Gastrocnemius medialis (tissue), 4 donors: ENCODE measurements at regions of chr1 and their contacts with region 1.

Region 1: DNA sequence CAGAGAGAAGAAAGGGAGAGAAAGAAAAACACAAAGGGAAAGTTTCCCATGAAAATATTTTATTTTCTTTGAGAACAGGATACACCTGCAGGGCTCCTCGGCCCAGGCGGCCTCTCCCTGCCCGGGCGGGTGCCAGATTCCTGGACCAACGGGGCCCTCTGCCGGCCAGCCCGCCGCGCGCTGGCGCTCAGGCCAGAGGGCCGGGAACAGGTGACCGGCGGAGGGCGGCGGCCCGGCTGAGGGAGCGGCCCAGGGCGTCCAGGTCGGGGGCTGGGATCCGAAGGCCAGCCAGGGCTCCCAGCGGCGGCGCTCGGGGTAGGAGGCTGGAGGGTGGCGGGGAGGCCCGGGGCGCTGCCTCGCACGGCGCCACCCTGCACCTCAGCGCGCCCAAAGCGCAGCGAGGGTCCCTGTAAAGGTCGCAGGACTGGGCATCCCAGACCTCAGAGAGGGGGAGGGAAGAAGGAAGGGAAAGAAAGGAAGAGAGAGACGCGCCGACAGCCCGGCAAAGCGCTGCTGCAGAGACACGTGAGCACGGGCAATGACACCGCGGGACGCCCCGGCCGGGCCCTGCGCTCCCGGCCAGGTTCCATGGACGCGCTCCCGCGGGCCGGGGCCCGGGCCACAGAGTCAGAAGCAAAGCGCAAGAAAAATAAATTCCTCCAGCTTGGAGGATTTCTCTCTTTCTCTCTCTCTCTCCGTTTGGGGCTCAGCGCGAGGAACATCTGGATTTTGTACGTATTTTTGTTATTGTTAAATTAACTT is 927 bp downstream of the WNT9A start:
- DNase-seq: peak; percentile 76 to 86
- ATAC-seq: peak; percentile 48 to 49
- H3K4me3 ChIP-seq: peak overlapping the region; percentile 63 to 80 (median 72)
- H3K27ac ChIP-seq: peak overlapping the region; percentile 91 to 98 (median 97)
- H3K4me1 ChIP-seq: peaks cover 46 to 49% of the 10 kb centered on the region in 2 donors
- H3K27me3 ChIP-seq: no peaks in the 10 kb centered on the region
- CTCF ChIP-seq: peak; percentile 71 to 90 (median 84)
- POLR2A ChIP-seq: peak; percentile 51 to 60

Region 2: GRCh38 chr1:227318003-227318852 is 628.6 kb before region 1 on chr1 and contains the start of gene CDC42BPA:
- in situ Hi-C with region 1: no loop called
- intact Hi-C with region 1: loop called (anchors 2 kb)
- DNase-seq: peak; percentile 57 to 73
- ATAC-seq: peak; percentile 62 to 77
- H3K4me3 ChIP-seq: peak within 1 kb of the TSS; percentile 77 to 93 (median 86)
- H3K27ac ChIP-seq: peak within 1 kb of the TSS; percentile 92 to 97 (median 94)
- H3K4me1 ChIP-seq: peaks cover 5 to 14% of the 10 kb centered on the region in 2 donors
- H3K27me3 ChIP-seq: no peaks in the 10 kb centered on the region
- CTCF ChIP-seq: no peak
- POLR2A ChIP-seq: peak; percentile 35 to 39
- total RNA-seq, gene CDC42BPA: 13.9 to 30.6 (median 16.6) TPM

Region 3: GRCh38 chr1:227563324-227564201 is 383.2 kb before region 1 on chr1 and contains the start of gene ZNF678:
- in situ Hi-C with region 1: no loop called
- intact Hi-C with region 1: loop called (anchors 2 kb)
- DNase-seq: peak; percentile 85 to 92
- ATAC-seq: peak; percentile 99
- H3K4me3 ChIP-seq: peak within 1 kb of the TSS; percentile 77 to 87 (median 83)
- H3K27ac ChIP-seq: peak within 1 kb of the TSS; percentile 78 to 85 (median 83)
- H3K4me1 ChIP-seq: peaks cover 8 to 11% of the 10 kb centered on the region in 2 donors
- H3K27me3 ChIP-seq: peaks cover 0 to 9% (median 4%) of the 10 kb centered on the region in 3 donors
- CTCF ChIP-seq: no peak
- POLR2A ChIP-seq: peak in 1 of 2 donors; percentile 35
- total RNA-seq, gene ZNF678: 2.3 to 7.3 (median 4.9) TPM

Region 4: DNA sequence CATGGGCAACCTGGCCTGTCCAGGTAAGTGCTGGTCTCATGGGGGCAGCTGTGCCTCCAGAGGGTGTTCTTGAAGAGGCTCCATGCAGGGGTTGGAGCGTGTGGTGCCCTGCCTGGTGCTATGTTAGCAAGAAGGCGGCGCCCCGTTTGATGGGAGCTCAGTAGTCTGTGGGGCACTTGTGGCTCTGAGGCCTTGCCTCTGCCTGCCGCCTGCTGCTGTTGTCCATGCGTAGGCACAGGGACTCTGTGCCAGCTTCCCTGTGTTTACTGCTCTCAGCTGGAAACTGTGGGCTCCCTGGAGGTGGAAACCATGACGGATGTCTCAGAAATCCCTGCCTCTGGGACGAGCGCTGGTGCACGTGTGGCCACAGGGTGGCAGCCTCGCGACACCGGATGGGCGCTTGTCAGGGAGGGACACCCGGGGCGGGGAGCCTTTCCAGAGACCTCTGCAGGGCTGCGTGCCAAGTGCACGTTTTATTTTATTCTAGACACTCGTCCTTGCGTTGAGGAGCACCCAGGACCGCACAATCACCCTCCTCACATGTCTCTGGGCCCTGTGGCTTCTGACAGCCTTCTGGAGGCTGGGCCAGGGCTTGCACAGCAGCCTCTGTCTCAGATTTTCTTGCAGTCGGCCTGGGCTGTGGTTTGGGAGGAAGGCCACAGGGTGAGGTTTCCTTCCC is 184.4 kb before region 1 on chr1:
- in situ Hi-C with region 1: loop called in 2 of 4 experiments (anchors 5 to 10 kb)
- intact Hi-C with region 1: loop called (anchors 1 kb)
- DNase-seq: peak; percentile 71 to 85
- ATAC-seq: peak; percentile 27 to 40
- H3K4me3 ChIP-seq: no peak overlapping the region
- H3K27ac ChIP-seq: peak overlapping the region; percentile 90 to 95 (median 92)
- H3K4me1 ChIP-seq: peaks cover 48 to 54% of the 10 kb centered on the region in 2 donors
- H3K27me3 ChIP-seq: no peaks in the 10 kb centered on the region
- CTCF ChIP-seq: peak; percentile 91 to 94 (median 93)
- POLR2A ChIP-seq: no peak

Region 5: DNA sequence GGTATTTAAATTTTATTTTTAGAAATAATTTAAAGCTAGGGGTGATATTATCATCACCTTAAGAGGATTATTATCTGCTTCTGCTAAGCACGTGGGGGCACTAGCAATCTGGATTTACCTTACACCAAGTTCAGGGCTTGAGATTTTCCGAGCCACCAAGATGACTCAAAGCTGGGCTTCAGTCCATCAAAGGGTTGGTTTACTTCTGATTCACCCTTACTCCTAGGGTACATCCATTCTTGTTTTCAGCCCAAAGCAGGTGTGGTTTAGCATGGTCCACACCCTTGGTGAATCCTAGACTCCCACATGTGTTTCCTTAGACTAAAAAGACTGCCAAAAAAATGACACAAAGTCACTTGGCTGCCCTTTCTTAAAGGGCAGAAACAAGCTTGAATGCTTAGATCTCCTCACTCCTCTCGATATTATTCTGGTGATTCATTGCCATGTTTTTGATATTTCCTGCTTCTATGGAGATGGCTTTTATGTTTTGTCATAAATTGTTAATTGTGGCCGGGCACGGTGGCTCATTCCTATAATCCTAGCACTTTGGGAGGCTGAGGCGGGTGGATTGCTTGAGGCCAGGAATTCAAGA is 141.1 kb before region 1 on chr1:
- in situ Hi-C with region 1: no loop called
- intact Hi-C with region 1: loop called (anchors 1 kb)
- DNase-seq: peak; percentile 52 to 75
- ATAC-seq: peak; percentile 100
- H3K4me3 ChIP-seq: no peak overlapping the region
- H3K27ac ChIP-seq: peak overlapping the region in 3 of 4 donors; percentile 37 to 68 (median 48)
- H3K4me1 ChIP-seq: no peaks in the 10 kb centered on the region
- H3K27me3 ChIP-seq: no peaks in the 10 kb centered on the region
- CTCF ChIP-seq: no peak
- POLR2A ChIP-seq: no peak

Region 6: DNA sequence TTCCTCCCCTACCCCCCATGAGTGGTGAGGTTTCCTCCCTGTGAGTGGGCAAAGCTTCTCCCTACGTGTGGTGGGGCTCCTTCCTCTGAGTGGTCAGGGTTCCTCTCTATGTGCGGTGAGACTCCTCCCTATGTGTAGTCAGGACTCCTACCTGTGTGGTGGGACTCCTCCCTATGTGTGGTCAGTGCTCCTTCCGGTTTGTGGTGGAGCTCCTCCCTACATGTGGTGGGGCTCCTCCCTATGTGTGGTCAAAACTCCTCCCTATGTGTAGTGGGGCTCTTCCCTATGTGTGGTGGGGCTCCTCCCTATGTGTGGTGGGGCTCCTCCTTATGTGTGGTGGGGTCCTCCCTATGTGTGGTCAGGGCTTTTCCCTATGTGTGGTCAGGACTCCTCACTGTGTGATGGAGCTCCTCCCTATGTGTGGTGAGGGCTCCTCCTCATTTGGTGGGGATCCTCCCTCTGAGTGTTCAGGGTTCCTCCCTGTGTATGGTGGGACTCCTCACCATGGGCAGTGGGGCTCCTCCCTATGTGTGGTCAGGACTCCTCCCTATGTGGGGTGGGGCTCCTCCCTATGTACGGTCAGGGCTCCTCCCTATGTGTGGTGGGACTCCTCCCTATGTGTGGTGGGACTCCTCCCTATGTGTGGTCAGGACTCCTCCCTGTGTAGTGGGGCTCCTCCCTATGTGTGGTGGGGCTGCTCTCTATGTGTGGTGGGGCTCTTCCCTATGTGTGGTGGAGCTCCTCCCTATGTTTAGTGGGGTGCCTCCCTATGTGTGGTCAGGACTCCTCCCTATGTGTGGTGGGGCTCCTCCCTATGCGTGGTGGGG is 102.3 kb before region 1 on chr1:
- in situ Hi-C with region 1: no loop called
- intact Hi-C with region 1: no loop called
- DNase-seq: no peak
- ATAC-seq: no peak
- H3K4me3 ChIP-seq: no peak overlapping the region
- H3K27ac ChIP-seq: no peak overlapping the region
- H3K4me1 ChIP-seq: no peaks in the 10 kb centered on the region
- H3K27me3 ChIP-seq: no peaks in the 10 kb centered on the region
- CTCF ChIP-seq: no peak
- POLR2A ChIP-seq: no peak